MCF 10A (cell line): ENCODE measurements at regions of chr20 and their contacts with region 1.

Region 1: DNA sequence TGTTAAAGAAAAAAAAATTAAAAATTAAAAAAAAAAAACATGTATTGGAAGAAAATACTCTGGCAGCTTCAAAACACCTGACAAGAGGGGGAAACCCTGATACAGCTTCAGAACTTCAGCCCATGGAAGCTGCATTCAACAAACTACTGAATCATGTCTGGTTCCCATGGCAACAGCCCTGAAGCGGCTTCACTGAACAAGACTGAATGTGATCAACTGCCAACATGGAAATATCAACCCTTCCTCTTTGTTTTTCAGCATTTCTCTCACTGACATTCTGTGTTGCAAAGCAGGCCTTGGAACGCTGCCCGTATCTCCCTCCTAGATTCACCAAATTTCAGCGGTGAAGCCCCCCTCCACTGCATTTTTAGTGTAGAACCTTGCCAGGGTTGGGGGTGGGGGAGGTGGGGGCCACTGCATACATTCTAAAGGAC is 91.3 kb upstream of the SHLD1 start:
- DNase-seq: peak; percentile 83
- H3K4me3 Mint-ChIP-seq: no peak overlapping the region
- H3K27ac Mint-ChIP-seq: peak overlapping the region; percentile 43
- H3K4me1 Mint-ChIP-seq: peaks cover 31% of the 10 kb centered on the region
- H3K27me3 Mint-ChIP-seq: no peaks in the 10 kb centered on the region
- CTCF ChIP-seq: no peak

Region 2: GRCh38 chr20:5696011-5696559 is 37.2 kb after region 1 on chr20:
- CTCF ChIA-PET with region 1: interaction called, 7 read pairs
- POLR2A ChIA-PET with region 1: interaction called, 10 read pairs
- intact Hi-C with region 1: loop called (anchors 2 kb)
- DNase-seq: peak; percentile 97
- H3K4me3 Mint-ChIP-seq: no peak overlapping the region
- H3K27ac Mint-ChIP-seq: peak overlapping the region; percentile 75
- H3K4me1 Mint-ChIP-seq: peaks cover 11% of the 10 kb centered on the region
- H3K27me3 Mint-ChIP-seq: no peaks in the 10 kb centered on the region
- CTCF ChIP-seq: no peak

Region 3: DNA sequence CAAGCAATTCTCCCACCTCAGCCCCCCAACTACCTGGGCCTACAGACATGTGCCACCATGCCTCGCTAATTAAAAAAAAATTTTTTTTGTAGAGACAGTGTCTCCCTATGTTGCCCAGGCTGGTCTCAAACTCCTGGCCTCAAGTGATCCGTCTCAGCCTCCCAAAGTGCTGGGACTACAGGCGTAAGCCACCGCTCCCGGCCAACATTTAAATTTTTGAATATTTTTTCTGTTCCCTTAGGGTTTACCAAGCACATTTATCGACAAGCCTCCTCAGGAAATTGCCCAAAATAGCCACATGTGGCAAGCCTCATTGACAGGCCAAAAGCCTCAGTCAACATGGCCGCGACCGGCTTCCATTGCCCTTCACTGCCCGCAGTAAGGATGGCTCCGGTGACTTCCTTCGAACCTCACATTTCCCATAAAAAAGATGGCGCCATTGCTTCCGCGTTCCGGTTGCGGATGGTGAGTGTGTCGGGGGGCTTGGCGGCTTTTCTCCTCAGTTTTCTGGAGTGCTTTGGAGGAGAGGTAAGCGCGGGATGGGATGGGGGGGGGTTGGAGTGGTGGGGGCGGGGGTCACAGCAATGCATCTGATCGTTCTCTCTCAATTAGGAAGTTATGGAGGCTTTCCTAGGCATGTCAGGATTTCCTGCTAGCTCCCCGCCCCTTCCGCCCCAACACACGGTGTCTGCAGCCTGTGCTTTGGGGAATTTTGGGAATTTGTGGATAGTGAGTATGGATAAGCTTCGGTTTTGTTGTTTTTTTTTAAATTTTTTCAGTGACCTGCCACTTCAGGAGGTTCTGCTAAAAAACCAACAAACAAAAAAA is 91.2 kb after region 1 on chr20 and contains the start of gene SHLD1:
- CTCF ChIA-PET with region 1: no interaction called
- POLR2A ChIA-PET with region 1: interaction called, 27 read pairs
- intact Hi-C with region 1: no loop called
- DNase-seq: peak; percentile 85
- H3K4me3 Mint-ChIP-seq: peak within 1 kb of the TSS; percentile 78
- H3K27ac Mint-ChIP-seq: peak within 1 kb of the TSS; percentile 95
- H3K4me1 Mint-ChIP-seq: peaks cover 3% of the 10 kb centered on the region
- H3K27me3 Mint-ChIP-seq: no peaks in the 10 kb centered on the region
- CTCF ChIP-seq: no peak
- total RNA-seq, gene SHLD1: 2.3 and 3.3 TPM in 2 replicates

Region 4: GRCh38 chr20:5766085-5766764 is 107.3 kb after region 1 on chr20:
- CTCF ChIA-PET with region 1: interaction called, 4 read pairs
- POLR2A ChIA-PET with region 1: interaction called, 14 read pairs
- intact Hi-C with region 1: no loop called
- DNase-seq: no peak
- H3K4me3 Mint-ChIP-seq: no peak overlapping the region
- H3K27ac Mint-ChIP-seq: no peak overlapping the region
- H3K4me1 Mint-ChIP-seq: peaks cover 13% of the 10 kb centered on the region
- H3K27me3 Mint-ChIP-seq: no peaks in the 10 kb centered on the region
- CTCF ChIP-seq: no peak